ENCODE measurements at regions of chr14 and their contacts with region 1.

Region 1: GRCh38 chr14:105861985-105862465 is 335.6 kb downstream of the TMEM121 start:
- DNase-seq: peak; percentile 57
- ATAC-seq: peak; percentile 30
- H3K4me3 Mint-ChIP-seq: peak overlapping the region; percentile 98
- H3K27ac Mint-ChIP-seq: peak overlapping the region; percentile 99
- H3K4me1 Mint-ChIP-seq: peaks cover 1% of the 10 kb centered on the region
- H3K27me3 Mint-ChIP-seq: no peaks in the 10 kb centered on the region
- CTCF ChIP-seq: no peak

Region 2: DNA sequence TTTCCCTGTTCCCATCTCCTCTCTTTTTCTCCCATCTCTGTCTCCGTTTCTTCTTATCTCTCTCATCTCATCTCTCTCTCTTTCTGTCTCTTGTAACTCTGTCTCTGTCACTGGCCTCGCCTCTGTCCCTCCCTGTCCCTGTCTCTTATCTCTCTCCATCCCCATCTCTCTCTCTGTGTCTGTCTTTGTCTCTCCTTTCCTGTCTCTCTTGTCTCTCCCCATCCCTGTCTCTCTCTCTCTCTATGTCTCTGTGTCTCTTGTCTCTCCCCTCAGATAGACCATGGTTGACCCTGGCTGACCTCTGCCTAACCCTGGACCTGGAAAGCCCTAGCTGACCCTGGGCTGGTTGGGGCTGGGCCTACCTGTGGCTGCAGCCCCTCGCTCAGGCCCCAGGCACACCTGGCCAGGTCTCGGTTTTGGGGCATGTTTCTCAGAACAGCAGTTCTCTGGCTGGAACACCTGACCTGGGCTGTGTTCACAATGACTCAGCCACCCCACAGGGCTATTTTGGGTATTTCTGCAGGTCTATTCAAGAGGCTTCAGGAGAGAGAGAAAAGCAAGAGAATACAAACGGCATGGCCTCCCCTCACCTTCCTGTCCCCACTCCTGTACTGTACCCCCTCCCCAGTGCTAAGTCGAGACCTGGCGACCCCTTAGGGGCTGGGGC is 161.3 kb before region 1 on chr14:
- CTCF ChIA-PET with region 1: no interaction called
- POLR2A ChIA-PET with region 1: interaction called, 11 read pairs
- intact Hi-C with region 1: no loop called
- DNase-seq: peak; percentile 45
- ATAC-seq: peak; percentile 5
- H3K4me3 Mint-ChIP-seq: peak overlapping the region; percentile 77
- H3K27ac Mint-ChIP-seq: peak overlapping the region; percentile 99
- H3K4me1 Mint-ChIP-seq: peaks cover 58% of the 10 kb centered on the region
- H3K27me3 Mint-ChIP-seq: no peaks in the 10 kb centered on the region
- CTCF ChIP-seq: no peak

Region 3: DNA sequence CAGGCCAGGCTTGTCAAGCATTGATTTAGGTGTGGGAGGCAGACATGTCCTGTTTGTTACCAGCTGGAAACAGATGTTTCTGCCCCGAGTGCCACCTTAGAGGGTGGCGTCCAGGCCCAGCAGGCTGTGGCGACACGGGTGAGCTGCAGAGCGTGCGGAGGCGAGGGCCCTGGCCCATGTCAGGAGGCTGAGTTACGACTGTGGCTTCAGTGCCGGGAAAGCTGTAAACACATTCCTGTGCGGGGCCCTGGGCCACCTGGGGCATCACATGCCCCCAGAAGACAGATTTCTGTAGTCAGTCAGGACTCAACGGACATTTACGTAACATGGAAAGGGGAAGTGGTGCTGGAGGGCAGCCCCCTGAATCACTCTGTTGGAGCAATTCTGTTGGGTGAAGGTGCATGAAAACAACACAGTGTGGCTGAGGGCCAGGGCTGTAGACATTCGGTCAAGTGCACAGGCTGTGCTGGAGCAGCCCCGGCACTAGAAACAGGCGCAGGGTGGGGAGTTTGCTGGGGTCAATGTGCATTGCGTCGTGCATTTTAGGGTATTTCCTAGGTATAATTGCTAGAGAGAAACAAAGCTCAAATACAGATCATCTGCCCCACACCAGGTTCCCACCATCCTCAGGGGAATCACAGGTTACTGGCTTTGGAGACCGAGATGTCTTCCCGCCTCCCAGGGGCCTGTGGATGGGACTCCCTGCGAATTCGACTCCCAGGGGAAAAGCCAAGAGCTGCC is 43.9 kb before region 1 on chr14:
- CTCF ChIA-PET with region 1: no interaction called
- POLR2A ChIA-PET with region 1: interaction called, 141 read pairs
- intact Hi-C with region 1: loop called (anchors 1 kb)
- DNase-seq: peak; percentile 74
- ATAC-seq: peak; percentile 85
- H3K4me3 Mint-ChIP-seq: peak overlapping the region; percentile 74
- H3K27ac Mint-ChIP-seq: peak overlapping the region; percentile 97
- H3K4me1 Mint-ChIP-seq: peaks cover 63% of the 10 kb centered on the region
- H3K27me3 Mint-ChIP-seq: no peaks in the 10 kb centered on the region
- CTCF ChIP-seq: no peak

Region 4: DNA sequence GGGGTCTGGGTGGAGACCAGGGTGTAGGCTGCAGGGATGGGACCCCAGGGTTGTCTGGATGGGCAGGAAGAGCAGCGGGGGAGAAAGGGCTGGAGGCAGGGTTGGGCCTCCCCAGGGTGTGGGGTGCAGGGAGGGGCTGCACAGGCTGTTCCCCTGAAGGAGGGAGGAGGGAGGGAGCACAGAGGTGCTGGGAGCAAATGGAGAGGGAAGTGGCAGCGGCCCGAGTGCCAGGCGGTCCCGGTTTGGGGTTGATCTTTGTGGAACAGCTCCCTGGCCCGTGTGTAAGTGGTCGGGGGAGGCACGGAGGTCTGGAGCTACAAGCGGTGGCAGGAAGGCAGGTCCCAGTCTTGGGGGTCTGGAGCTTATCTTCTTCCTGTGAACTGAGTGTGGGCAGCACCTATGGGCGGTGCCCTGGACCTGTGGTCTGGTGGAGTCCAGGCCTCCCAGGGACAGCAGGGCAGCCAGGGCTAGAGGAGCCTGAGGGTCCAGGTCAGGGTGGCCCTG is 56.0 kb after region 1 on chr14:
- CTCF ChIA-PET with region 1: no interaction called
- POLR2A ChIA-PET with region 1: interaction called, 61 read pairs
- intact Hi-C with region 1: loop called (anchors 2 kb)
- DNase-seq: no peak
- ATAC-seq: no peak
- H3K4me3 Mint-ChIP-seq: peak overlapping the region; percentile 77
- H3K27ac Mint-ChIP-seq: peak overlapping the region; percentile 82
- H3K4me1 Mint-ChIP-seq: peaks cover 35% of the 10 kb centered on the region
- H3K27me3 Mint-ChIP-seq: no peaks in the 10 kb centered on the region
- CTCF ChIP-seq: no peak

Region 5: GRCh38 chr14:106185837-106186233 is 323.8 kb after region 1 on chr14:
- CTCF ChIA-PET with region 1: no interaction called
- POLR2A ChIA-PET with region 1: interaction called, 13 read pairs
- intact Hi-C with region 1: no loop called
- DNase-seq: no peak
- ATAC-seq: peak; percentile 60
- H3K4me3 Mint-ChIP-seq: no peak overlapping the region
- H3K27ac Mint-ChIP-seq: no peak overlapping the region
- H3K4me1 Mint-ChIP-seq: peaks cover 5% of the 10 kb centered on the region
- H3K27me3 Mint-ChIP-seq: peaks cover 7% of the 10 kb centered on the region
- CTCF ChIP-seq: no peak

Region 6: DNA sequence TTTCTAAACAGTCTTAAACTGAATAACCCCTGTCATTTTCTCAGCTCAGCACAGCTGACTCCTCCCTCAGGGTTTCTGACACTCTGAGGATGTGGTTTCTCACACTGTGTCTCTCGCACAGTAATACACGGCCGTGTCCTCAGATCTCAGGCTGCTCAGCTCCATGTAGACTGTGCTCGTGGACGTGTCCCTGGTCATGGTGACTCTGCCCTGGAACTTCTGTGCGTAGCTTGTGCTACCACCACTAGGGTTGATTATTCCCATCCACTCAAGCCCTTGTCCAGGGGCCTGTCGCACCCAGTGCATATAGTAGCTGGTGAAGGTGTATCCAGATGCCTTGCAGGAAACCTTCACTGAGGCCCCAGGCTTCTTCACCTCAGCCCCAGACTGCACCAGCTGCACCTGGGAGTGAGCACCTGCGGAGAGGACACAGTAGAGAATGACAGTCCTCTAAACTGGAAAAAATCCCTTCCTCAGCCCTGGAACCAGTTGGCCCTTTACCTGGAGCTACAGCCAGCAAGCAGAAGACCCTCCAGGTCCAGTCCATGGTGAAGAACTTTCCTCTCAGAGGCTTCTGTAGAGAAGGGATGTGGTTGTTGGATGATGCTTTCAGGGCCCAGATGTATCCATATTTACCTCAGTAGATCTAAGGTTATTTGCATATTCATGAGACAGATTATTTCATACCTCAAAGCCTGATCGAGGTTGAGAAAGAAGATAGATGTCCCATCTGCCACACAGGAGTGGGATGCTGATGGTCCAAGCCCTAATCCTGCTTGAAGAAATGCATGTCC is 649.2 kb after region 1 on chr14:
- CTCF ChIA-PET with region 1: no interaction called
- POLR2A ChIA-PET with region 1: interaction called, 10 read pairs
- intact Hi-C with region 1: no loop called
- DNase-seq: no peak
- ATAC-seq: no peak
- H3K4me3 Mint-ChIP-seq: peak overlapping the region; percentile 24
- H3K27ac Mint-ChIP-seq: no peak overlapping the region
- H3K4me1 Mint-ChIP-seq: peaks cover 22% of the 10 kb centered on the region
- H3K27me3 Mint-ChIP-seq: peaks cover 24% of the 10 kb centered on the region
- CTCF ChIP-seq: no peak

Measured in activated B cell treated with CpG ODN at 0.5 μM for 24 hours (primary cell).